IMR-90 (cell line): ENCODE measurements at regions of chr3 and their contacts with region 1.

Region 1: DNA sequence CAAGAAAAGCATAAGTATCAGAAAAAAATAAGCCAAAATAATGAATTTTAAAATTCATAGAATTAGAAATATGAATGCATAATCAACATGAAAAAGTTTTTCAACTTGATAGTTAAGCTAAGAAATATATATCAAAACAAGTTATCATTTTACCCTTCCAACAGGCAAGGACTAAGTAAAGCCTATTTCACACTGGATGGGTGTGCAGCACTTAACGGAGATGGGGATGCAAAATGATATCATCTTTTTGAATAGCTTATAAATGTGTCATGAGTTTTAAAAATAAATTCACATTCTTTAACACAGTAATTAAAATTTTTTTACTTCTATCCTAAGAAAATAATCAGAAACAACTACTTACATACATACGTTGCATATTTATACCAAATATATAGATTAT is 20.9 kb downstream of the PIK3R4 start:
- DNase-seq: no peak
- ATAC-seq: no peak
- H3K4me3 ChIP-seq: no peak overlapping the region
- H3K27ac ChIP-seq: no peak overlapping the region
- H3K4me1 ChIP-seq: no peaks in the 10 kb centered on the region
- H3K27me3 ChIP-seq: no peaks in the 10 kb centered on the region
- CTCF ChIP-seq: no peak
- POLR2A ChIP-seq: no peak
- RAD21 ChIP-seq: no peak

Region 2: DNA sequence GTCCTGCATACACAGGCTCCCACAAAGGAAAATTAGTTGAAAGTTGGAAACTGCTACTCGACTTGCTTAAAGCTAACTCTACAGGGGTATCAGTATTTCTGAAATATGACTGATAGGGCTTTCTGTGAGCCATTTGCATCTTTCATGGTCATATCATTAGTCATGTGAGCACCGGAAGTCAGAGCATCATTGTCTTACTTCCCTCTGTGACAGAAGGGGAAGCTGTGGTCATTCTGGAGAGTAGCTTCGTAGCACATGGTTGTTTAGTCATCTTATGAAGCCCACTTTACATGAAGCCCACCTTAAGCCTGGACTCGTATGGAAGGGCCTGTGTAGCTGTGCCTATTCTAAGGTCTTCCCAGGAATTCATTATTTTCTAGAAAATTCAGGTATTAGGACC is 311.3 kb before region 1 on chr3:
- CTCF ChIA-PET with region 1: no interaction called
- POLR2A ChIA-PET with region 1: no interaction called
- dilution Hi-C with region 1: no loop called
- in situ Hi-C with region 1: no loop called
- intact Hi-C with region 1: no loop called
- DNase-seq: no peak
- ATAC-seq: no peak
- H3K4me3 ChIP-seq: no peak overlapping the region
- H3K27ac ChIP-seq: no peak overlapping the region
- H3K4me1 ChIP-seq: no peaks in the 10 kb centered on the region
- H3K27me3 ChIP-seq: no peaks in the 10 kb centered on the region
- CTCF ChIP-seq: no peak
- POLR2A ChIP-seq: no peak
- RAD21 ChIP-seq: no peak

Region 3: DNA sequence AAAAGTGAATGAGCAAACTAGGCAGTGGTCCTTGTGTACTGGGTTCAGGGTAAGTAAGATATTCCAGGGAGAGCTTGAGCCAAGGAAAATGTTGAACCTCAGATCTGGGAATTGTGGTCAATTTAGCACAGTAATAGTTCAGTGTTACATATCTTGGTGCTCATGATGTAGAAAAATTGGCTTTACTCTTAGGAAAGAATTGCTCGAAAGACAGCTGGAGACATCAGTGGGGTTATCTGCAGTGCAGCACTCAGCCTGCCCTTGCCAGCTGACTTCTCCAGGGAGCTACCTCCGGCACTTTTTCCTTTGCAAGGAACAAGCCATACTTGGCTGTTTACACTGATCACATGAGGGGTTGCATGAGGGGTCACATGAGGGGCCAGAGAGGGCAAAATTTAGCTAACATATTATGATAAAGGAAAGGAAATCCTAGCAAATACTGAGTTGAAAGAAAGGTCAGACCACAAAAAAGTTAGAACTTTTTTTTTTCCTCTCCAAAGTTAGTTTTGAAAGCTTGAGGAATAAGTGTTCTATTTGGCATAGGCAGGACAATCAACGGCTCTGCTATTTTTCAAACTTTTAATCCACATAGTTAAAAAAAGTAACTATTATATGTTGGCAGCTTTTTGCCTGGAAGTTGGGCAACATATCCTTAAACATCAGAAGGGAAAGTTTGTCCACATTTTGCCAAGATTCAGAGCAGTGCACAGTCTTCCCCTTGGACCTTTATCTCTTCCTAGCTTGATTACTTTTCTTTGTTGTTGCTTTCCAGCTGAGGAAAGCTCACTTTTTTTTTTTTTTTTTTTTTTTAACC is 116.4 kb before region 1 on chr3:
- CTCF ChIA-PET with region 1: no interaction called
- POLR2A ChIA-PET with region 1: no interaction called
- dilution Hi-C with region 1: no loop called
- in situ Hi-C with region 1: no loop called
- intact Hi-C with region 1: no loop called
- DNase-seq: no peak
- ATAC-seq: no peak
- H3K4me3 ChIP-seq: no peak overlapping the region
- H3K27ac ChIP-seq: no peak overlapping the region
- H3K4me1 ChIP-seq: no peaks in the 10 kb centered on the region
- H3K27me3 ChIP-seq: no peaks in the 10 kb centered on the region
- CTCF ChIP-seq: no peak
- POLR2A ChIP-seq: no peak
- RAD21 ChIP-seq: no peak

Region 4: GRCh38 chr3:130671545-130672312 is 54.0 kb before region 1 on chr3:
- CTCF ChIA-PET with region 1: no interaction called
- POLR2A ChIA-PET with region 1: no interaction called
- dilution Hi-C with region 1: no loop called
- in situ Hi-C with region 1: no loop called
- intact Hi-C with region 1: loop called (anchors 10 kb)
- DNase-seq: peak; percentile 16
- ATAC-seq: no peak
- H3K4me3 ChIP-seq: no peak overlapping the region
- H3K27ac ChIP-seq: no peak overlapping the region
- H3K4me1 ChIP-seq: no peaks in the 10 kb centered on the region
- H3K27me3 ChIP-seq: no peaks in the 10 kb centered on the region
- CTCF ChIP-seq: no peak
- POLR2A ChIP-seq: no peak
- RAD21 ChIP-seq: no peak